ENCODE measurements at regions of chr2 and their contacts with region 1.

Region 1: GRCh38 chr2:26284136-26284535 is 39.4 kb downstream of the HADHB start:
- DNase-seq: no peak
- H3K4me3 ChIP-seq: no peak overlapping the region
- H3K27ac ChIP-seq: no peak overlapping the region
- H3K4me1 ChIP-seq: no peaks in the 10 kb centered on the region
- H3K27me3 ChIP-seq: no peaks in the 10 kb centered on the region
- CTCF ChIP-seq: no peak

Region 2: DNA sequence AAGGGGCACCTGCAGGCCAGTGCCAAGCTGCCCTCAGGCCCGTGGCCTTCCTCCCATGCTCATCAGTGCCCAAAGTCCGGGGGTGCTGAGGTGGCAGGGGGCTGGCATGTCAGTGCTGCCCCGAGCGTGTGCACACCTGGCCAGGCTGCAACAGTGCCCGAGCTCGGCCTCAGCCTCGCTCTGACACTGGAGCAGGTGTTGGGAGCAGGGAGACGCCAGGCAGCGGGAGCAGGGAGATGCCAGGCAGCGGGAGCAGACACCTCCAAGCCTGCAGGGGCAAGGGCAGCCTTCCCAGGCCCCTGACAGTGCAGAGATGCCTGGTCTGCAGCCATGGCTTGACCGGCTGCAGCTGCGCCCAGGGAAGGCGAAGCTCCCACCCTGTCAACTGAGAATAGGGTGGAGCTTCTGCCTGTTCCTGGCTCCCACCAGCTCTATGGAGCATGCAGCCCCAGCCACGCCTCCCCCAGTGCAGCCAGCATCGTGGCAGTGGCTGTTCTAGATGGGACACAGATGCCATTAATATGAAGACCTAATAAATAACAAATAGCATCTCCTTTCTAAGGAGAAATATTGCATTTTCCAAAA is 693.1 kb before region 1 on chr2:
- intact Hi-C with region 1: no loop called
- DNase-seq: no peak
- H3K4me3 ChIP-seq: no peak overlapping the region
- H3K27ac ChIP-seq: no peak overlapping the region
- H3K4me1 ChIP-seq: peaks cover 7% of the 10 kb centered on the region
- H3K27me3 ChIP-seq: no peaks in the 10 kb centered on the region
- CTCF ChIP-seq: no peak

Region 3: DNA sequence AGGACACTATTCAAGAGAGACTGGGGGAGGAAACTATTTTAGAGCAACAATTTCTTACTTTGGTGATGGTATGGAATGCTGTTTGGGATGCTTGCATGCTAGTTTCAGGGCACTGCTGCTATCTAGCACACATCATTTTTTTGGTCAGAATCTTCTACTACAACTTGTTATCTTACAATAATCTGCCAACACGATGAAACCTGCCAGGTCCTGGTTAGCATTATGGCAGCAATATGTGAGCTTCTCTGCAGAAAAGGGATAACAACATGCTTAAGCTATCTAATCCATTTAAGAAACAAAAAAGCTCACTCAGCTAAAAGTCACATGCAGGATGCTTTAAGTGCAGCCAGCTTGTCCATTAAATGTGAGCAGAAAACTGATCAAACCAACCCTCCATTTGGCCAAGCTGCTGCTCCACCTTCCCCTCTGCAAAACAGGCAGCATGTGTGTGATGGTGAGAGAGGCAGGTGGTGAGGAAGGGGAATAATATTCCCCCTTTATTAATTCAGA is 81.1 kb before region 1 on chr2:
- intact Hi-C with region 1: loop called (anchors 10 kb)
- DNase-seq: no peak
- H3K4me3 ChIP-seq: no peak overlapping the region
- H3K27ac ChIP-seq: no peak overlapping the region
- H3K4me1 ChIP-seq: peaks cover under 1% of the 10 kb centered on the region
- H3K27me3 ChIP-seq: no peaks in the 10 kb centered on the region
- CTCF ChIP-seq: no peak

Region 4: DNA sequence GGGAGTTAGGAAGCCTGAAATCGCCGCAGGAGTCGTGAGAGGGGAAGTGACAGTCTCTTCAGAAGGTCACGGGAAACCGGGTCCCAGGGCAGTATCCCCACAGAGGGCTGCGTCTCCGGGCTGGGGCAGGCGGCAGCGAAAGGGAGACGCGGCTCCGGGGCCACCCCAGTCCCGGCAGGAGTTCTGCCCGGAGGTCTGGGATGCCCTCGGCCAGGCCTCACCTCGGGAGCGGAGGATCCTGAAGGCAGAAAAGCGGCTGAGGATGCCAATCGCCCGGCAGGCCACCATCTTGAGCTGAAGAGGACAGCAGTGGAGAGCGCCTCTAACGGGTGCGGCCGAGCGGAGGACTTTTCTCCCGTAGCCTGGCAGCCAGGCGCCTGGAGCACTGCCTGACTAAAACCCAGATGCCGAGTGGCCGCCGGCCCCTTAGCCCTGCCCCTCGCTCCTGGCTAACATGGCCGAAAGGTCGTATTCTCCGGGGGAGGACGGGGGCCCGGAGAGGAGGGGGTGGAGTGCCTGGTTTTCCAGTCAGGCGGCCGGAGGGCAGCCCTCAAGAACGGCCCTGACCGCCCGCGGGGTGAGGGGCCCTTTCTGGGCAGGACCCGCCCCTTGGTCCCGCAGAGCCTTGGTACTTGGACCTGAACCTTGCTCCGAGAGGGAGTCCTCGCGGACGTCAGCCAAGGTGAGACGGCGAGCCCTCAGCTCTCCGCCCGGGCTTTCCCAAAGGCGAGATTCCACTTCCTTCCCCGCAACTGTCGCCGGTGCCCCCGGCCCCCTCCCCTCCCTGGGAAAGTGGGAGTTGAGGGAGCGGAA is 39.6 kb before region 1 on chr2 and contains the starts of genes HADHA and HADHB:
- intact Hi-C with region 1: loop called (anchors 5 kb)
- DNase-seq: peak; percentile 92
- H3K4me3 ChIP-seq: peak within 1 kb of the TSS; percentile 90
- H3K27ac ChIP-seq: peak within 1 kb of the TSS; percentile 99
- H3K4me1 ChIP-seq: peaks cover 93% of the 10 kb centered on the region
- H3K27me3 ChIP-seq: no peaks in the 10 kb centered on the region
- CTCF ChIP-seq: peak; percentile 52
- total RNA-seq, gene HADHA: 523 TPM
- total RNA-seq, gene HADHB: 1,332 TPM